H1 (cell line): ENCODE measurements at regions of chr19 and their contacts with region 1.

Region 1: DNA sequence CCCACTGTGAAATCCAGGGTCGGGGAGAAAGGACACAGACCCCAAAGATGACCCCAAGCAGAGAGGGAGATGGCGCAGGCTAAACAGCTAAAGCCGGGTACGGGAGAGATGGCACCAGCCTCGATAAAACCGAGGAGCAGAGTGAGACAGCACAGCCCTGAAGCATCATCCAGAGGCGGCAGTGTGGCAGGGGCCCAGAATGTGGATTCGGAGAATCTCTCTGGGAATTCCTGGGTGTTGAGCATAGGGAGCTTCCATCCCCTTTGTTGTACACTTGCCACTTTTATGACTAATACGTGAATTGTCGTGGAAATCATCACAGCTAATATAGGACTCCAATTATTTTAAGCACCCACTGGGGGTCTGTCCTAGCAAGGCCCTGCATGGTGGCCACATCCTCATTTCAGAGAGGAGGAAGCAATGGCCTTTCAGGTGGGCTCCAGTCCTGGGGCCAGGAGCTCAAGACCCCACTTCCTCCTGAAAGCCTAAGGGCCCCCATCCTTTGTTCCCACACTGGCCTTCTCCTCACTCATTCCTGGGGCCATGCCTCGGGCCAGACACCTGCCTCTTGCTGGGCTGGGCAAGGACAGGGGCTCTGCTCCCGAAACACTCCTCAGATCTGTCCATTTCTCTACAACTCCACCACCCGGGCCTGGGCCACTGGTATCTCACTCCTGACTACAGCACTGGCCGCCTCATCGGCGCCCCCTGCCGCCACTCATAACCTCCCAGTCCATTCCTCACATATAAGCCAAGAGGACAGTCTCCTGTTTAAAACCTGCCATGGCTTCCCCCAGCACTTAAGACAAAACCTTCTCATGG is 29.3 kb upstream of the ATP1A3 start:
- DNase-seq: peak in 1 of 2 experiments; percentile 84
- H3K4me3 ChIP-seq: no peak overlapping the region
- H3K27ac ChIP-seq: no peak overlapping the region
- H3K4me1 ChIP-seq: no peaks in the 10 kb centered on the region; a peak in 1 of 7 replicates
- H3K27me3 ChIP-seq: no peaks in the 10 kb centered on the region
- CTCF ChIP-seq: peak; percentile 68 to 84 (median 81)
- EP300 ChIP-seq: no peak
- POLR2A ChIP-seq: no peak
- RAD21 ChIP-seq: peak; percentile 40 to 52

Region 2: DNA sequence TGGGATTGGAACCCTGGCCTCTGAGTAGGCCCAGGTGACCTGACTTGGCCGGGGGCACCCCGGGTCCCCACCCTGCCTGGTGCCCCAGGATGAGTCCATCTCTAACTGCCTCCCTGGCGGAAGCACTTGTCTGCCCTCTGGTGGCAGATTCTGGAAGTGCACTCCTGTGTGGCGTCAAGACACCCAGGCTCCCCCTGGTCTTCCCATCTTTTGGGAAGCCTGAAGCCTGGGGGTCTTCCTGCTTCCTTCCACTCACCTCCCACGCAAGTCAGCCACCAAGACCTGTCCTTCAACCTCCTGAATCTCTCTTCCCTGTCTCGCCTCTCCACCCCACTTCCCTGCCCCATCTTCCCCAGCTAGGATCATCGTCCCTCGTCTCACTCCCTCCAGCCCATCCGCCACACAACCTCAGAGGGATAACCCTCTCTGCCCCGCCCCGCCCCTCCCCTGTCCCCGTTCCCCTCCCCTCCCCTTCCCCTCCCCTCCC is 71.6 kb before region 1 on chr19:
- CTCF ChIA-PET with region 1: no interaction called
- POLR2A ChIA-PET with region 1: no interaction called
- DNase-seq: peak; percentile 76 to 99
- H3K4me3 ChIP-seq: peak overlapping the region in 3 of 4 experiments; percentile 32 to 52 (median 38); a peak in 6 of 8 replicates
- H3K27ac ChIP-seq: no peak overlapping the region
- H3K4me1 ChIP-seq: no peaks in the 10 kb centered on the region
- H3K27me3 ChIP-seq: no peaks in the 10 kb centered on the region
- CTCF ChIP-seq: peak; percentile 93 to 98 (median 97)
- EP300 ChIP-seq: no peak
- POLR2A ChIP-seq: no peak
- RAD21 ChIP-seq: peak; percentile 89 to 90

Region 3: DNA sequence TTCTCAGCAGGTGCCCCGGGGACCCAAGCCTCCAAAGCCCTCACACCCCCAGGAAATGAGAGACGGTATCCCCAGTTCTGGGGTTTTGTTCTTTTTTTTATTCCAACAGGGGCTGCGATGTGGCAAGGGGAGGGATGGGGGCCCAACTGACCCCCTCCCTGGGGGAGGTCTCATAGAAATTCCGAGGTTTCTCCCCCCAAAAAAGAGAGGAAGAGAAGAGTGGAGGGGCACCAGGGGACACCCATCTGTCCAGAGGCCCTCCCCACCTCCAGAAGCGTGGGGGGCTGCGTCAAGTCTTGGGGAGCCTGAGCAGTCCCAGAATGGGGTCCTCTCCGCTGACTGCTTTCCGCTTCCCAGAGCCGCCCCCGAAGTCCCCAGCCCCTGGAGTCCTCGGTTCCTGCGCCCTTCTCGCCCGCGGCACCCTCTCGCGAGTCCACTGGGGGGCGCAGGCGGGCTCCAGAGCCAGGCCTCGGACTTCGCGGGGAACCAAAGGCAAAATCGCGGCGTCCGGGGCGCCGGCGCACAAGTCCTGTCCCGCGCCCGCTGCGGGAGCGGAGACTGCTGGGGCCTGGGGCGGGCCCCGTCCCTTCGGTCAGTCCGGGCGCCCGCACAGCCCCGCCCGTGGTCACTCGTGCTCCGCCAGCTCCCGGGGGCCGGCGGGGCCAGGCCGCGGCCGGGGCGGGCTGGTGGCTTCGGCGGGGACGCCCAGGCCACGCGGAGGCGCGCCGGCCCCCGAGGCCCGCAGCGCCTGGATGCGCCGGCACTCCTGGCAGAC is 24.9 kb before region 1 on chr19:
- CTCF ChIA-PET with region 1: interaction called, 27 read pairs
- POLR2A ChIA-PET with region 1: interaction called, 6 read pairs
- DNase-seq: peak in 1 of 2 experiments; percentile 91
- H3K4me3 ChIP-seq: peak overlapping the region in 2 of 4 experiments; percentile 29 to 46; a peak in 6 of 8 replicates
- H3K27ac ChIP-seq: no peak overlapping the region
- H3K4me1 ChIP-seq: peaks cover 0 to 19% (median 7%) of the 10 kb centered on the region in 4 experiments; a peak in 5 of 7 replicates
- H3K27me3 ChIP-seq: peaks cover 13 to 68% (median 58%) of the 10 kb centered on the region in 4 experiments
- CTCF ChIP-seq: peak; percentile 79 to 88 (median 82)
- EP300 ChIP-seq: no peak
- POLR2A ChIP-seq: no peak; a peak in 1 of 3 replicates
- RAD21 ChIP-seq: peak; percentile 51 to 74

Region 4: GRCh38 chr19:42010245-42011126 is 12.8 kb before region 1 on chr19:
- CTCF ChIA-PET with region 1: interaction called, 58 read pairs
- POLR2A ChIA-PET with region 1: interaction called, 4 read pairs
- DNase-seq: no peak
- H3K4me3 ChIP-seq: no peak overlapping the region
- H3K27ac ChIP-seq: no peak overlapping the region
- H3K4me1 ChIP-seq: no peaks in the 10 kb centered on the region
- H3K27me3 ChIP-seq: no peaks in the 10 kb centered on the region
- CTCF ChIP-seq: no peak
- EP300 ChIP-seq: no peak
- POLR2A ChIP-seq: no peak
- RAD21 ChIP-seq: no peak